ENCODE measurements at regions of chr10 and their contacts with region 1.

Region 1: GRCh38 chr10:102641880-102642735 is 2.2 kb upstream of the TRIM8 start:
- DNase-seq: peak; percentile 99
- ATAC-seq: peak; percentile 67
- H3K4me3 Mint-ChIP-seq: peak overlapping the region; percentile 85
- H3K27ac Mint-ChIP-seq: peak overlapping the region; percentile 91
- H3K4me1 Mint-ChIP-seq: peaks cover 17% of the 10 kb centered on the region
- H3K27me3 Mint-ChIP-seq: no peaks in the 10 kb centered on the region
- CTCF ChIP-seq: no peak

Region 2: GRCh38 chr10:102352066-102352715 is 289.9 kb before region 1 on chr10:
- CTCF ChIA-PET with region 1: no interaction called
- POLR2A ChIA-PET with region 1: no interaction called
- intact Hi-C with region 1: no loop called
- DNase-seq: peak; percentile 79
- ATAC-seq: peak; percentile 86
- H3K4me3 Mint-ChIP-seq: no peak overlapping the region
- H3K27ac Mint-ChIP-seq: no peak overlapping the region
- H3K4me1 Mint-ChIP-seq: peaks cover 6% of the 10 kb centered on the region
- H3K27me3 Mint-ChIP-seq: no peaks in the 10 kb centered on the region
- CTCF ChIP-seq: peak; percentile 98

Region 3: DNA sequence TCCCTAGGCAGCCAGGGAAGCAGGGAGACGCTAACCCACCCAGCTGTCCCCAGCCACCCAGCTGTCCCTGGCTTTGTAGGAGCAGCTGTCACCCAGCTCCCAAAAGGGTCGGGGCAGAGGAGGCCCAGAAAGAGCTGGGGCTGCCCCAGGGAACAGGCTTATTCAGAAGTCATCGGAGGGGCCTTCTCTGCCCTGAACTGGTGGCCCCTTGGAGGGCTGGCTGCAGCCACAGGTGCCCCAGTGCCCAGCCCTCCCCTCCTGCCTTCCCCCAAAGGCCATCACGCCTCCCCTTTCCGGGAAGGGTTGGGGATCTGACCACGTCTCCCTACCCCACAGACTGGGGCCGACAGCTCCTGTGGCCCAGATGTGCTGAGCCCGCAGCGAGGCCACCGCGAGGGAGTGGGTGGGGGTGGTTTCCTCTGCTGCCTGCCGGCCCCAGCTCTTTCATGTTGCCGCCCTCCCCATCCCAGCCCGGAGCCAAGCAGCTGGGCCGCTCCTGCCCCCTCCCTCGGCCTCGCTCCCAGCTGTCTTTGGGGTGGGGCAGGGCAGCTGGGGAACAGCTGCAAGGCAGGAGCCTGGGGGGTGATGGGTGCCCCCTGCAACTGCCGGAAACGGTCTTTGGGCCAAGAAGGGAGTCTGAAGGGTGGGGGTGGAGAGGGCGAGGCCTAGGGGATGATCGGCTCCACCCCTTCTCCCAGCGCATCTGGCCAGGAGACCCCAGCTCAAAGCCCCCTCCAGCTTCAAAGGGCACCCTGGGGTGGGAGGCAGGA is 19.0 kb after region 1 on chr10:
- CTCF ChIA-PET with region 1: interaction called, 6 read pairs
- POLR2A ChIA-PET with region 1: interaction called, 35 read pairs
- intact Hi-C with region 1: loop called (anchors 2 kb)
- DNase-seq: peak; percentile 93
- ATAC-seq: peak; percentile 83
- H3K4me3 Mint-ChIP-seq: peak overlapping the region; percentile 61
- H3K27ac Mint-ChIP-seq: peak overlapping the region; percentile 91
- H3K4me1 Mint-ChIP-seq: peaks cover 45% of the 10 kb centered on the region
- H3K27me3 Mint-ChIP-seq: no peaks in the 10 kb centered on the region
- CTCF ChIP-seq: no peak

Region 4: DNA sequence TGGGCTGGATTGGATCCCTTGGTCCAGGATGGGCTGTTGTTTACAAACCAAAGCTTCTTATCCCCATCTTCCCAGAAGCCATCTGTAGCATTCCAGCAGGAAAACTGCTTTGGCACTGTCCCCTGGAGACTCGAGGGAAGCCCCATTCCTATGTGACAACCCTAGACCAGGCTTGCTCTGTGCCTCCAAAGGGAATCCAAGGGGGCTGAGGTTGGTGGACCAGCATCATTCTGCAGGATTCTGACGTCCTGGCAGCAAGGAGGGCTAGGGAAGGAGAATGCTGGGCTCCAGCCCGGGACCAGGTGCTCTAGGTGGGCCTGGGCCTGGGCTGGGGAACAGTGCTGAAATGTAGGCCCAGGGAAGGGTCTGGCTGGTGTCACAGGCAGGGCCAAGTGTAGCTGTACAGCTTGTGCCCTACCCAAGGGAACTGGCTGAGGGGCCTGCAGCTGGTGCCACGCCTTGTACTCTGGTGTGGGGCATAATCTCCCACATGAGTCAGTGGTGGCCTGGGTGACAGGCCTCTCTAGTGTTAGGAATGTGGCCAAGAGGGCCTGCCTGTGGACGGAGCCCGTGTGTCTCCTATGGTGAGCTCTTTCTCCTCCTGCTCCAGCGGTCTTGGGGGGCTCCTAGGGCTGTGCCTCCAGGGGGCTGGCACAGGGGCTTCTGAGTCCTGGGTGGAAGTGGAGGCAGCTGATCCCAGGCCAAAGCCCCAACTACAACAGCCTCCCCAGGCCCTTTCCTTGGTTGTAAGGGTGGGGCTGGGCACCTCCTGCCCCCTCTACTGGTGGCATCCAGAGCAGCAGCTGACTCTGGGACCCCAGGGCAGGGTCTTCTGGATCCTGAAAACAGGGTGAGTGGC is 27.3 kb after region 1 on chr10:
- CTCF ChIA-PET with region 1: interaction called, 22 read pairs
- POLR2A ChIA-PET with region 1: interaction called, 10 read pairs
- intact Hi-C with region 1: no loop called
- DNase-seq: no peak
- ATAC-seq: peak; percentile 50
- H3K4me3 Mint-ChIP-seq: no peak overlapping the region
- H3K27ac Mint-ChIP-seq: no peak overlapping the region
- H3K4me1 Mint-ChIP-seq: peaks cover 40% of the 10 kb centered on the region
- H3K27me3 Mint-ChIP-seq: no peaks in the 10 kb centered on the region
- CTCF ChIP-seq: peak; percentile 74

Region 5: DNA sequence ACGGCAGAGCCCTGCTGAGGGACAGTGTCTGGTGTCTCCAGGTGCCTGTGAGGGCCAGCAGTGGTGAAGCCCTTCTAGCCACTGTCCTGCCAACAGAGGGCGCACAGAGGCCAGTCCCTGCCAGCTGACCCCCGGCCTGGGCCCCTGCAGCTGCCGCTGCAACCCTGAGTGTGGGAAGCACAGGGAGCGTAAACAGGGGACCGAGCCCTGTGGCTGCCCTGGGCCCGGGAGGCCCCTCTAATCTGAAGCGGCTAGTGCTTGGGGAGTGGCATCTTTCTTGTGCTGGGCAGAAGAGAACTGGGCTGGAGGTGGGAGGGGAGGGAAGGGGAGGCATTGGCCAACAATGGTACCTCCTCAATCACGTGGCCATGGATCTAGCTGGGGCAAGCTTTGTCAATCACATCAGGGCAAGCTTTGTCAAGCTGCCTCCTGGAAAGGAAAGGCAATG is 36.8 kb after region 1 on chr10:
- CTCF ChIA-PET with region 1: interaction called, 22 read pairs
- POLR2A ChIA-PET with region 1: interaction called, 10 read pairs
- intact Hi-C with region 1: no loop called
- DNase-seq: peak; percentile 42
- ATAC-seq: no peak
- H3K4me3 Mint-ChIP-seq: no peak overlapping the region
- H3K27ac Mint-ChIP-seq: no peak overlapping the region
- H3K4me1 Mint-ChIP-seq: peaks cover 48% of the 10 kb centered on the region
- H3K27me3 Mint-ChIP-seq: no peaks in the 10 kb centered on the region
- CTCF ChIP-seq: peak; percentile 25

Region 6: DNA sequence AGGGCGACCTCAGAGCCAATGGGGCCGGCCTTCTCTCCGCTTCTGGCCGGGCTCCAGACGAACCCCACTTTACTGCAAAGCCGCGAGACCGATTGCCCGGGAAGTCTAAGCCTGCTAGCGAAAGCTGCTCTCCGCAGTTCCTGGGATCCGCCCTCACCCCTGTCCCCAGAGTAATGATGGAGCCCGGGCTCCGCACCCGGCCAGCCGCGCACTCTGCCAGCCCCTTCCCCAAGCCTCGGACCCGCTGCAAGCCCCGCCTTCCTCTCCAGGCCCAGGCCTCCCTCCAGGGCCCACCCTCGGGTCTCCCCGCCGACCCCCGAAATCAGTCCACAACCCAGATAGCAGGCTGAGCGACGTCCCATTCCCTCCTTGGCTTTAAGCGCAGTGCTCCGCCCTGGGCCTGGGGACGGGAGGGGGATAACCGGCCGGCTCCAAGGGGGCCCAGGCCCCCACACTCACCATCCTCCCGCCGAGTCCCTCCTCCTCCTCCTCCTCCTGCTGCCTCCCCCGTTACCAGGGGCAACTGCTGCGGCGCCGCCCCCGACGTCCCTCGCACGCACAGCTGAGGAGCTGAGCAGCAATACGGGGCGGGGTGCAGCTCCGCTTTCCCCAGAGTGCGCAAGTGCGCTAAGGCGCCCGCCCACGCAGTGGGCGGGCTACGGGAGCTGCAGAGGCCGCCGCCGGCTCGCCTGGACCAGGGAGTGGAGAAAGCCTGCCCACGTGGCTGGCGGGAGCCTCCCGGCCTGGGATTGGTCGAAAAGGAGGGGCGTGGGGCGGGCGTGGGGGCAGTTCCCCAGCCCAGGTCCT is 71.9 kb after region 1 on chr10 and contains the start of gene ARL3:
- CTCF ChIA-PET with region 1: interaction called, 14 read pairs
- POLR2A ChIA-PET with region 1: interaction called, 14 read pairs
- intact Hi-C with region 1: loop called (anchors 5 kb)
- DNase-seq: peak; percentile 99
- ATAC-seq: peak; percentile 90
- H3K4me3 Mint-ChIP-seq: peak within 1 kb of the TSS; percentile 82
- H3K27ac Mint-ChIP-seq: peak within 1 kb of the TSS; percentile 93
- H3K4me1 Mint-ChIP-seq: peaks cover 56% of the 10 kb centered on the region
- H3K27me3 Mint-ChIP-seq: no peaks in the 10 kb centered on the region
- CTCF ChIP-seq: peak; percentile 43
- total RNA-seq, gene ARL3: 5.3 to 6.2 TPM

Region 7: DNA sequence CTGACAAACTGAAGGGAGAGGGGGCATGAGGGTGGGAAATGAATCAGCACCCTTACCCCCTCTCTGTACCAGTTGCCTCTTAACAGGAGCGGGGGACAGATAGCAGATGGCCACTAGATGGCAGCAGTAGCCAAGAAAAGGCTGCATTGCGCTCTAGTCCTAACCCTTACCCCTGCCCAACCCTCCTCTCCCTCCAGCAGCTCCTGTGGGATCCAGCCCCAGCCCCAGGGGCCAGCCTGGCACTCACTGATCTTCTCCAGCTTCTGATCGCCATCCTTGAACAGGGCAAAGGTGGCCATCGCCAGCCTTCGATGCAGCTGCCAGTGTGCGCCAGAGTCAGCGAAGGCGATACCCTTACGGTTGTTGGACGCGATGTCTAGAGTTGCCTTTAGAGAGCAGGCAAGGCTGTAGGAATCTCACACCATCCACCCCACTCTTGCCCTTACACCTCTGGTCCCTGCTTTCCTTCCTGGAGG is 192.9 kb after region 1 on chr10:
- CTCF ChIA-PET with region 1: no interaction called
- POLR2A ChIA-PET with region 1: no interaction called
- intact Hi-C with region 1: no loop called
- DNase-seq: peak; percentile 85
- ATAC-seq: peak; percentile 97
- H3K4me3 Mint-ChIP-seq: no peak overlapping the region
- H3K27ac Mint-ChIP-seq: no peak overlapping the region
- H3K4me1 Mint-ChIP-seq: peaks cover 3% of the 10 kb centered on the region
- H3K27me3 Mint-ChIP-seq: no peaks in the 10 kb centered on the region
- CTCF ChIP-seq: peak; percentile 89